Heart right ventricle (tissue), 16 donors: ENCODE measurements at regions of chr13 and their contacts with region 1.

Region 1: GRCh38 chr13:96090240-96091101 is 564 bp downstream of the HS6ST3 start:
- DNase-seq: peak in 1 of 2 donors; percentile 11
- ATAC-seq: peak in 2 of 8 donors; percentile 30 to 34
- H3K4me3 ChIP-seq: peak overlapping the region in 9 of 10 donors; percentile 32 to 59 (median 44)
- H3K27ac ChIP-seq: no peak overlapping the region
- H3K4me1 ChIP-seq: peaks cover 0 to 16% (median 5%) of the 10 kb centered on the region in 9 donors
- H3K27me3 ChIP-seq: peaks cover 10 to 93% (median 86%) of the 10 kb centered on the region in 7 donors
- CTCF ChIP-seq: no peak

Region 2: GRCh38 chr13:96551546-96551945 is 461.1 kb after region 1 on chr13:
- intact Hi-C with region 1: loop called in 1 of 10 experiments (anchors 5 kb)
- DNase-seq: no peak
- ATAC-seq: no peak
- H3K4me3 ChIP-seq: no peak overlapping the region
- H3K27ac ChIP-seq: no peak overlapping the region
- H3K4me1 ChIP-seq: no peaks in the 10 kb centered on the region
- H3K27me3 ChIP-seq: no peaks in the 10 kb centered on the region
- CTCF ChIP-seq: no peak